Endothelial cell of umbilical vein (primary cell): ENCODE measurements at regions of chr10 and their contacts with region 1.

Region 1: DNA sequence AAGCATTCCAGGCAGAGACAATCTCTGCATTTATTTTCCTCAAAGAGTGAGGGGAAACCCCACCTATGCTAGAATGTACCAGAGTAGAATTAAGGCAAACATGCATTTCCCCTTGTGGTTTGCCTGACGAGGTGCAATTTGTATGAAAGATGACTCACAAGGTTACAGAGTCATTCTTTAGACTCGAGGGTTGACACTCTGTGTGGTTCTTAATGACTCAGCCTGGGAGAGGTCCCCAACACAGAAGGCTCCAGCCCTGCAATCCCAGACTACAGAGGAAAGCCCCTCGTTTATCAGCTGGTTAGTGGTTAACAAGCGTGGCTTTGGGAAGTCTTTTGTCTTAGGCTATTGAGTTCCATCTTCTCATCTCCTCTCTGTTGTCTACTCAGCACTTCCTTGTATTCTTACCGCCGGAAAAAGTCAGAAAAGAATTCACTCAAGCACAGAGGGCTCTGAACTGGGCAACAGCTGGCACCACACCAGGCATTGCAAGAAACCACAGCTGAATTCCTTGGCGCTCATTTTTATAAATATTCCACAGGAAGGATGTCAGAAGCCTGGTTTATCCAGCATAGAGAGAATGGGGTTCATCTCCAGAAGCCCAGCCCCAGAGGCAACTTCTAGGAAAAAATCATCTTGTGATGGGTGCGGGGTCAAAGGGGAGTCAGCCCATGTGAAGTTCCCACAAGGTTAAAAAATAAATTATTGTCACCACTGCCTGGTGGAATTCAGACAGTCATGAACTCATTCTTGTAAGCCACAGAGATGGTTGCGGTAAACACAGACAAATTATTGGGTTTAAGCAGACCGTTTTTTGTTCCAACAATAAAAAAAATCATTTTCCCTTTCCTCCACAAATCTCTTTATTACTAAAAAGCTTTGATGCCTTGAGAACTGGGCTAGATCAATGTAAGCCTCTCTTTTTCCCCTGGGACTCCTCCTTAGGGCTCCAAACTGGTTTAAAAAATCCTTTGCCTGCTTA is 24.5 kb upstream of the SVIL start:
- DNase-seq: peak; percentile 98
- H3K4me3 ChIP-seq: no peak overlapping the region
- H3K27ac ChIP-seq: peak overlapping the region; percentile 92
- H3K4me1 ChIP-seq: peaks cover 41% of the 10 kb centered on the region
- H3K27me3 ChIP-seq: no peaks in the 10 kb centered on the region
- CTCF ChIP-seq: peak in 1 of 2 donors; percentile 49
- POLR2A ChIP-seq: peak; percentile 70

Region 2: GRCh38 chr10:29590915-29591650 is 68.2 kb before region 1 on chr10:
- CTCF ChIA-PET with region 1: interaction called, 3 read pairs
- POLR2A ChIA-PET with region 1: no interaction called
- dilution Hi-C with region 1: no loop called
- intact Hi-C with region 1: loop called (anchors 1 kb)
- DNase-seq: no peak
- H3K4me3 ChIP-seq: no peak overlapping the region
- H3K27ac ChIP-seq: no peak overlapping the region
- H3K4me1 ChIP-seq: peaks cover 23% of the 10 kb centered on the region
- H3K27me3 ChIP-seq: no peaks in the 10 kb centered on the region
- CTCF ChIP-seq: no peak
- POLR2A ChIP-seq: no peak

Region 3: GRCh38 chr10:29635711-29636144 is 23.5 kb before region 1 on chr10:
- CTCF ChIA-PET with region 1: interaction called, 3 read pairs
- POLR2A ChIA-PET with region 1: no interaction called
- dilution Hi-C with region 1: no loop called
- intact Hi-C with region 1: loop called (anchors 1 kb)
- DNase-seq: peak; percentile 57
- H3K4me3 ChIP-seq: no peak overlapping the region
- H3K27ac ChIP-seq: peak overlapping the region; percentile 93
- H3K4me1 ChIP-seq: peaks cover 37% of the 10 kb centered on the region
- H3K27me3 ChIP-seq: no peaks in the 10 kb centered on the region
- CTCF ChIP-seq: no peak
- POLR2A ChIP-seq: no peak

Region 4: GRCh38 chr10:29648114-29648982 is 10.9 kb before region 1 on chr10:
- CTCF ChIA-PET with region 1: interaction called, 13 read pairs
- POLR2A ChIA-PET with region 1: no interaction called
- dilution Hi-C with region 1: no loop called
- intact Hi-C with region 1: loop called (anchors 1 kb)
- DNase-seq: peak; percentile 45
- H3K4me3 ChIP-seq: no peak overlapping the region
- H3K27ac ChIP-seq: peak overlapping the region; percentile 50
- H3K4me1 ChIP-seq: peaks cover 35% of the 10 kb centered on the region
- H3K27me3 ChIP-seq: no peaks in the 10 kb centered on the region
- CTCF ChIP-seq: no peak
- POLR2A ChIP-seq: no peak

Region 5: GRCh38 chr10:29691564-29692072 is 32.3 kb after region 1 on chr10:
- CTCF ChIA-PET with region 1: interaction called, 7 read pairs
- POLR2A ChIA-PET with region 1: interaction called, 3 read pairs
- dilution Hi-C with region 1: no loop called
- intact Hi-C with region 1: loop called (anchors 1 kb)
- DNase-seq: peak; percentile 97
- H3K4me3 ChIP-seq: peak overlapping the region in 1 of 3 experiments; percentile 57
- H3K27ac ChIP-seq: peak overlapping the region; percentile 100
- H3K4me1 ChIP-seq: peaks cover 49% of the 10 kb centered on the region
- H3K27me3 ChIP-seq: no peaks in the 10 kb centered on the region
- CTCF ChIP-seq: no peak
- POLR2A ChIP-seq: peak; percentile 28

Region 6: DNA sequence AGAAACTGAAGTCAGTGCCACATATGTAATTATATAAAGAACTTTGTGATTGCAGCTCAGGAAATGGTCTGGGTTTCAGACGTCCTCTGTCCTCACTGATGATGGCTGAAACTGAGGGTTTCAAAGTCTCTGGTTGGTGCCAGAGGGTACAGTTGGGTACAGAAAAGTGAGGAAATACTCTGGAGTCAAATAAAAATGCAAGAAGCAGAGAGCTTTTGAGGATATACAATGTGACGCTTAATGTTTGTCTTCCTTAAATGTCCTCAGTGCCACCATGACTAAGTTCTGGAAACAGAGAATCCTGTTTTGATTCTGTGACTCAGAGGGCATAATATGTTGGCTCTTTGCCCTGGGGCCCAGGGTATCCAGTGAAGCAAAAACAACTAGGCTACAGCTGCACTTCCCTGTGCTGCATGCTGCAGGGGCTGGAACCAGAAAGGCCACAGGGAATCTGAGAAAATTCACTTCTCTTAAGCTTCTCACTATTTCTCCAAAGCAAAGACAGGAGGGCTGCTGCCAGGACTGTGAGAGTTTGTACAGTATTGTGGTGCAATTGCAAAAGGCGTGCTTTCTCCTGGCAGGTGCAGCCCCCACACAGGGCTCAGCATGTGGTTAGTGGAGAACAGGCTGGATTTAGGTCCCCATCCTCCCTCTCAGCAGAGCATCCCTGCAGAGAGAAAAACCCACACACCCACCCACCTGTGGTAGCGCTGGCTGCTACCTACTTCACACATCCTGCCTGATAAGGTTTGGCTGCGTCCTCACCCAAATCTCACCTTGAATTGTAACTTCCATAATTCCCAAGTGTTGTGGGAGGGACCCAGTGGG is 145.0 kb after region 1 on chr10:
- CTCF ChIA-PET with region 1: no interaction called
- POLR2A ChIA-PET with region 1: no interaction called
- dilution Hi-C with region 1: no loop called
- intact Hi-C with region 1: loop called (anchors 1 kb)
- DNase-seq: peak; percentile 99
- H3K4me3 ChIP-seq: peak overlapping the region in 1 of 3 experiments; percentile 31
- H3K27ac ChIP-seq: peak overlapping the region; percentile 99
- H3K4me1 ChIP-seq: peaks cover 54% of the 10 kb centered on the region
- H3K27me3 ChIP-seq: no peaks in the 10 kb centered on the region
- CTCF ChIP-seq: no peak
- POLR2A ChIP-seq: no peak

Region 7: DNA sequence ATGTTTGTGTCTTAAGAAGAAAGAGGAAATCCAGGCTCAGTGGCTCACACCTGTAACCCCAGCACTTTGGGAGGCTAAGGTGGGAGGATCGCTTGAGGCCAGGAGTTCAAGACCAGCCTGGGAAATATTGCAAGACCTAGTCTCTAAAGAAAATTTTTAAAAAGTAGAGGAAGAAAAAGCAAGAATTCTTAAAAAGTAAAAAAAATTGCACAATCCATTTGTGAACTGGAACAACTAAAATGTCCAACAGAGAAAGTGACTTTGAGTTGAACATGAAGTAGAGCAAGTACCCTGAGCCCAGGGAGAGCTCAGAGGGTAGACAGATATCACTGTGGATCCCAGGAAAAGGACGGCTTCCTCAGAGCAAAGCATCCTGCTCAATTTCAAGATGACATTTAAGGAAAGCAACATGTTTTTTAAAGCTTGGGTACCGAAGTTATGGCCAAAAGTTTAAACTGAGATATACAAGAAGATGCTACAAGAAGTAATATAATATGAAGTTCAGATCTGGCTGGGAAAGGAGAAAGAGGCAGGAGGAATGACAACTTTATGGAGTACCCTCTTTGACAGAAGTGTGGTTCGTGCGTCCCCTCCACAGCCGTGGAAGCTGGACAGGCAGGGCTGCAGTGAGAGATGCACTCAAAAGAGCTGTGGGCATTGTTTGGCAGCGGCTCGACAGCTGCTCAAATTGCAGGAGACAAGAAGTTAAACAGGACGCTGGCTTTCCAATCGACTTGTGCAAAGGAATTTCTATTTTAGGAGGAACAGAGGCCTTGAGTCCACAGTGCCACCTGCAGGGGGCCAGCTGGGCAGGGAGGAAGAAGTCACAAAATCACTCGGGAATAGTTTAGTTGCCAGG is 198.8 kb after region 1 on chr10:
- CTCF ChIA-PET with region 1: interaction called, 5 read pairs
- POLR2A ChIA-PET with region 1: no interaction called
- dilution Hi-C with region 1: no loop called
- intact Hi-C with region 1: loop called (anchors 1 kb)
- DNase-seq: peak; percentile 92
- H3K4me3 ChIP-seq: no peak overlapping the region
- H3K27ac ChIP-seq: no peak overlapping the region
- H3K4me1 ChIP-seq: peaks cover 21% of the 10 kb centered on the region
- H3K27me3 ChIP-seq: no peaks in the 10 kb centered on the region
- CTCF ChIP-seq: peak; percentile 79 to 86
- POLR2A ChIP-seq: no peak

Region 8: GRCh38 chr10:29969255-29970011 is 310.2 kb after region 1 on chr10:
- CTCF ChIA-PET with region 1: no interaction called
- POLR2A ChIA-PET with region 1: no interaction called
- dilution Hi-C with region 1: no loop called
- intact Hi-C with region 1: no loop called
- DNase-seq: peak; percentile 4
- H3K4me3 ChIP-seq: no peak overlapping the region
- H3K27ac ChIP-seq: no peak overlapping the region
- H3K4me1 ChIP-seq: peaks cover 17% of the 10 kb centered on the region
- H3K27me3 ChIP-seq: no peaks in the 10 kb centered on the region
- CTCF ChIP-seq: no peak
- POLR2A ChIP-seq: no peak